ENCODE measurements at regions of chr19 and their contacts with region 1.

Region 1: GRCh38 chr19:5031231-5032100 is 62.6 kb downstream of the KDM4B start:
- DNase-seq: peak in 1 of 2 donors; percentile 90
- H3K4me3 ChIP-seq: no peak overlapping the region
- H3K27ac ChIP-seq: no peak overlapping the region
- H3K4me1 ChIP-seq: peaks cover 0 to 7% of the 10 kb centered on the region in 2 donors
- H3K27me3 ChIP-seq: no peaks in the 10 kb centered on the region
- CTCF ChIP-seq: peak; percentile 93 to 95 (median 94)

Region 2: DNA sequence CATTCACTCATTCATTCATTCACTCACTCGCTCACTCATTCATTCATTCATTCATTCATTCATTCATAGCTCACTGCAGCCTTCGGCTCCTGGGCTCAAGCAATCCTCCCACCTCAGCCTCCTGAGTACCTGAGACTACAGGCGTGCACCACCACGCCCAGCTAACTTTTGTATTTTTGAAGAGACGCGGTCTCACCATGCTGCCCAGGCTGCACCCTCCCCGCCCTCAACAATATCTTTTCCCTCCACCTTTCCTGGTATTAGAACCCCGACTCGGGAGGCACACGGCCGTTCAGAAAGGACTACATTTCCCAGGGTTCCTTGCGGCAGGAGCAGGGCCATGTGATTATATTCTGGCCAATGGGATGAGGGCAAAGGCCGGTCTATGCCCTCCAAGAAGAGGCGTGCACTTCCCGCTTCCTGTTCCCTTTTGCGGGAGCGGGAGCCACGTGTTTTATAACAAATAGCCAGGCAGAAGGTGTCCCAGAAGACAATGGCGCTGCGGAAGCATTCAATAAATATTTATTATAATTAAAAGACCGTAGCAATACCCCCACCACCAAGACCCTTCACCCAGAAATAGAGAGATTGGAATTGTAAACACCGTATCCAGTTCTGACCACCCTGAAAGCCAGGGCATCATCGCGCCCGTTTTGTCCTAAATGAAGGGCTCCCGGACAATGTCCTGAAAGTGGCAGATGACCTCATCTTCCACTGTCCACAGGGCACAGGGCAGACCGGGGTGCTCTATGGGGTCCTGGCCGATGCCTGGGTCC is 215.9 kb before region 1 on chr19:
- intact Hi-C with region 1: loop called (anchors 1 kb)
- DNase-seq: peak; percentile 76 to 94
- H3K4me3 ChIP-seq: peak overlapping the region in 1 of 2 donors; percentile 32
- H3K27ac ChIP-seq: peak overlapping the region; percentile 49 to 56
- H3K4me1 ChIP-seq: peaks cover 10 to 28% of the 10 kb centered on the region in 2 donors
- H3K27me3 ChIP-seq: no peaks in the 10 kb centered on the region
- CTCF ChIP-seq: no peak

Region 3: GRCh38 chr19:4851551-4852290 is 179.7 kb before region 1 on chr19:
- intact Hi-C with region 1: loop called (anchors 5 kb)
- DNase-seq: peak in 1 of 2 donors; percentile 83
- H3K4me3 ChIP-seq: no peak overlapping the region
- H3K27ac ChIP-seq: no peak overlapping the region
- H3K4me1 ChIP-seq: no peaks in the 10 kb centered on the region
- H3K27me3 ChIP-seq: no peaks in the 10 kb centered on the region
- CTCF ChIP-seq: peak; percentile 88 to 90 (median 89)

Region 4: GRCh38 chr19:4867534-4868285 is 163.8 kb before region 1 on chr19 and contains the start of gene PLIN3:
- intact Hi-C with region 1: loop called (anchors 1 kb)
- DNase-seq: peak; percentile 89 to 98
- H3K4me3 ChIP-seq: peak within 1 kb of the TSS; percentile 71 to 83
- H3K27ac ChIP-seq: peak within 1 kb of the TSS; percentile 68 to 81
- H3K4me1 ChIP-seq: peaks cover 5 to 17% of the 10 kb centered on the region in 2 donors
- H3K27me3 ChIP-seq: no peaks in the 10 kb centered on the region
- CTCF ChIP-seq: no peak
- total RNA-seq, gene PLIN3: 84.3 TPM

Region 5: GRCh38 chr19:4909897-4910593 is 121.4 kb before region 1 on chr19:
- intact Hi-C with region 1: loop called (anchors 5 kb)
- DNase-seq: peak; percentile 71 to 94
- H3K4me3 ChIP-seq: peak overlapping the region; percentile 76 to 77
- H3K27ac ChIP-seq: no peak overlapping the region
- H3K4me1 ChIP-seq: peaks cover 18 to 22% of the 10 kb centered on the region in 2 donors
- H3K27me3 ChIP-seq: no peaks in the 10 kb centered on the region
- CTCF ChIP-seq: no peak

Region 6: DNA sequence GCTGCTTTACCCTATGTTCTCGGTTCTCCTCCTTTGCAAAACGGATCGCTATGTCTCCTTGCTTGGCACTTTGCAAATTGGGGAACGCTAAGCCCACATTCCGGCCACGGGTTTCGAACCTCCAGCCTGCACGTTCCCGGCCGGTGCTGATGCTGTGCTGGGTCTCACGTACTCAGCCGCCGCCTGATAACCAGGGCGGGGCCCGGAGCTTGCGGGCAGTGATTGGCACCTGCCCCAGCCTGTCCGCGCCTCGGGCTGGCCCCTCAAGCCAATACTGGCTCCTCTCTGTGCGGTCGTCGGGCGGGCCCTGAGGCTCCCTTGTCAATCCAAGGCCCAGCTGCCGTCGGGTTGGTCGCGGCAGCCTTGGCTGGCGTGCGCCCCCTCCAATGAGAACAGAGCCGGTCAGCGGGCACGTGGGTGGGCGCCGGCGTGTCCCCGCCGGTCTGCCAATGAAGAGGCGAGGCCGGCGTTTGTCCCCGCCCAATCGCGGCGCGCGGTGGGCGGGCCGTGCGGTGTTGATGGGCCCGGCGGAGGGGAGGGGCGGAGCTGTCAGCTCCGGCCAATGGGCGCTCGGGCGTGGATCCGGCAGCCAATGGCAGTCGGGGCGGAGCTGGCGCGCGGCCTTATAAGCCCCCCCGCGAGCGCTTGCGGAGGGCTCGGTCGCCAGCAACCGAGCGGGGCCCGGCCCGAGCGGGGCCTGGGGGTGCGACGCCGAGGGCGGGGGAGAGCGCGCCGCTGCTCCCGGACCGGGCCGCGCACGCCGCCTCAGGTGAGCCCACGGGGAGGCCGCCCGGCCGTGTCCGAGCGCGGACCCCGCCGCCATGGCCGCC is 62.8 kb before region 1 on chr19 and contains the start of gene KDM4B:
- intact Hi-C with region 1: loop called (anchors 2 kb)
- DNase-seq: peak; percentile 99 to 100
- H3K4me3 ChIP-seq: peak within 1 kb of the TSS; percentile 62 to 90
- H3K27ac ChIP-seq: peak within 1 kb of the TSS; percentile 24 to 40
- H3K4me1 ChIP-seq: peaks cover 9 to 18% of the 10 kb centered on the region in 2 donors
- H3K27me3 ChIP-seq: no peaks in the 10 kb centered on the region
- CTCF ChIP-seq: no peak
- total RNA-seq, gene KDM4B: 46.0 TPM

Region 7: GRCh38 chr19:5250127-5250659 is 218.7 kb after region 1 on chr19:
- intact Hi-C with region 1: no loop called
- DNase-seq: peak; percentile 34 to 87
- H3K4me3 ChIP-seq: peak overlapping the region in 1 of 2 donors; percentile 38
- H3K27ac ChIP-seq: no peak overlapping the region
- H3K4me1 ChIP-seq: peaks cover 0 to 8% of the 10 kb centered on the region in 2 donors
- H3K27me3 ChIP-seq: no peaks in the 10 kb centered on the region
- CTCF ChIP-seq: no peak